ENCODE measurements at regions of chr4 and their contacts with region 1.

Region 1: GRCh38 chr4:126627255-126627654 is 1005.5 kb upstream of the INTU start:
- DNase-seq: peak; percentile 38
- ATAC-seq: peak; percentile 82
- H3K4me3 ChIP-seq: no peak overlapping the region
- H3K27ac ChIP-seq: no peak overlapping the region
- H3K4me1 ChIP-seq: peaks cover 3% of the 10 kb centered on the region; the same call in 1 of the 2 replicates
- H3K27me3 ChIP-seq: no peaks in the 10 kb centered on the region
- CTCF ChIP-seq: peak; percentile 69
- POLR2A ChIP-seq: no peak
- RAD21 ChIP-seq: peak; percentile 70

Region 2: DNA sequence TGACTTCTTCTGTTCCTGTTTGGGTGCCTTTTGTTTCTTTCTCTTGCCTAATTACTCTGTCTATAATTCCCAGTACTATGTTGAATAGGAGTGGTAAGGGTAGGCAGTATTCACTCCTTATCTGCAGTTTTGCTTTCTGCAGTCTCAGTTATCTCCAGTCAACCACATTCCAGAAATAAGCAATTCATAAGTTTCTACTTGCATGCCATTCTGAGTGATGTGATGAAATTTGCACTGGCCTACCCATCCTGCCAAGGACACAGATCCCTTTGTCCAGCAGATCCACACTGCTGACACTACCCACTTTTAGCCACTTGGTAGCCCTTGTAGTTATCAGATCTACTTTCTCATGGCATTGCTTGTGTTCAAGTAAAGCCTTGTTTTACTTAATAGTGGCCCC is 33.9 kb after region 1 on chr4:
- CTCF ChIA-PET with region 1: no interaction called
- POLR2A ChIA-PET with region 1: no interaction called
- dilution Hi-C with region 1: no loop called
- in situ Hi-C with region 1: no loop called
- intact Hi-C with region 1: no loop called
- DNase-seq: peak; percentile 28
- ATAC-seq: peak; percentile 66; the same call in 1 of the 2 replicates
- H3K4me3 ChIP-seq: no peak overlapping the region
- H3K27ac ChIP-seq: no peak overlapping the region
- H3K4me1 ChIP-seq: no peaks in the 10 kb centered on the region
- H3K27me3 ChIP-seq: no peaks in the 10 kb centered on the region
- CTCF ChIP-seq: no peak
- POLR2A ChIP-seq: no peak
- RAD21 ChIP-seq: no peak

Region 3: GRCh38 chr4:126807132-126807531 is 179.9 kb after region 1 on chr4:
- CTCF ChIA-PET with region 1: no interaction called
- POLR2A ChIA-PET with region 1: no interaction called
- dilution Hi-C with region 1: no loop called
- in situ Hi-C with region 1: no loop called
- intact Hi-C with region 1: loop called (anchors 5 kb)
- DNase-seq: peak; percentile 4
- ATAC-seq: no peak; the same call in 1 of the 2 replicates
- H3K4me3 ChIP-seq: no peak overlapping the region
- H3K27ac ChIP-seq: no peak overlapping the region
- H3K4me1 ChIP-seq: peaks cover 3% of the 10 kb centered on the region; the same call in 1 of the 2 replicates
- H3K27me3 ChIP-seq: no peaks in the 10 kb centered on the region
- CTCF ChIP-seq: no peak
- POLR2A ChIP-seq: no peak
- RAD21 ChIP-seq: no peak

Region 4: GRCh38 chr4:126957556-126957955 is 330.3 kb after region 1 on chr4:
- CTCF ChIA-PET with region 1: no interaction called
- POLR2A ChIA-PET with region 1: no interaction called
- dilution Hi-C with region 1: no loop called
- in situ Hi-C with region 1: loop called (anchors 10 kb)
- intact Hi-C with region 1: loop called (anchors 10 kb)
- DNase-seq: peak; percentile 52
- ATAC-seq: peak; percentile 40; the same call in 1 of the 2 replicates
- H3K4me3 ChIP-seq: no peak overlapping the region
- H3K27ac ChIP-seq: no peak overlapping the region
- H3K4me1 ChIP-seq: peaks cover 3% of the 10 kb centered on the region; the same call in 1 of the 2 replicates
- H3K27me3 ChIP-seq: no peaks in the 10 kb centered on the region
- CTCF ChIP-seq: peak; percentile 48
- POLR2A ChIP-seq: no peak
- RAD21 ChIP-seq: peak; percentile 44; the same call in 1 of the 2 replicates

Region 5: DNA sequence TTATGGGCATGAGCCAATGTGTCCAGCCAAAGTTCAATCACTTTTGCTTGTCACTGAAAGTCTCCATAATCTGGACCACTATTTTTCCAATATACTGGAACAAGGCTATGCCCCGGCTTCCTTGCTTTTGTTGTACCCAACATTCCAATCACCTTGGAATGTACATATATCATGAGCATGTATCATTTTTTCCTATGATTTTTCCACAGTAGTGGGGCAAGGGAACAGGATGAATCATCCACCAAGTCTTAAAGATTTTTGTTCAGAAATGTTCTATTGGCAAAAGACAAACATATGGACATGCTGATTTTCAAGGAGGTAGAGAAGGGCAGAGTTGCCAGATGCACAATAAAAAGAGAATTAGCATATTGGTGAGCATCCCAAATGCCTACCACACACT is 457.4 kb after region 1 on chr4:
- CTCF ChIA-PET with region 1: no interaction called
- POLR2A ChIA-PET with region 1: no interaction called
- dilution Hi-C with region 1: no loop called
- in situ Hi-C with region 1: no loop called
- intact Hi-C with region 1: no loop called
- DNase-seq: peak; percentile 3
- ATAC-seq: no peak
- H3K4me3 ChIP-seq: no peak overlapping the region
- H3K27ac ChIP-seq: no peak overlapping the region
- H3K4me1 ChIP-seq: no peaks in the 10 kb centered on the region
- H3K27me3 ChIP-seq: no peaks in the 10 kb centered on the region
- CTCF ChIP-seq: no peak
- POLR2A ChIP-seq: no peak
- RAD21 ChIP-seq: no peak

Region 6: DNA sequence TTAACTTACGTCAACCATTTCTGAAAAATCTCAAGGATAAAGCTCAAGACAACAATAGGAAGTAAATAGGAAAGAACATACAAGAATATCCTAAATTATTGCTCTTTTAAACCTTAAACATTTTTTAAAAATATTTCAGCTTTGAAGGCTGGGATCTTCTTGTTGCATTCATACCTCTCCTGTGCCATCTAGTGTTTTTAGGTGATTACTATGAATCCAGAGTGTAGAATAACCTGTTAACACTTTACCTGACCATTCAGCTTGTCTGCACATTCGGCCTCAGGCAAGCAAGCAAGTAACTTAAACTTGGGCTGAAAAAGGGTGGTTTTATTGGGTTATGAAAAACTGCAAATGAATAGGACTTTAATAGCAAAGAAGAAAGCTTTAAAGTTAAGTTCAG is 497.7 kb after region 1 on chr4:
- CTCF ChIA-PET with region 1: no interaction called
- POLR2A ChIA-PET with region 1: interaction called, 3 read pairs
- dilution Hi-C with region 1: no loop called
- in situ Hi-C with region 1: no loop called
- intact Hi-C with region 1: loop called (anchors 5 kb)
- DNase-seq: peak; percentile 24
- ATAC-seq: no peak
- H3K4me3 ChIP-seq: no peak overlapping the region
- H3K27ac ChIP-seq: no peak overlapping the region
- H3K4me1 ChIP-seq: peaks cover 4% of the 10 kb centered on the region
- H3K27me3 ChIP-seq: no peaks in the 10 kb centered on the region
- CTCF ChIP-seq: peak; percentile 48
- POLR2A ChIP-seq: no peak
- RAD21 ChIP-seq: peak; percentile 51

Region 7: DNA sequence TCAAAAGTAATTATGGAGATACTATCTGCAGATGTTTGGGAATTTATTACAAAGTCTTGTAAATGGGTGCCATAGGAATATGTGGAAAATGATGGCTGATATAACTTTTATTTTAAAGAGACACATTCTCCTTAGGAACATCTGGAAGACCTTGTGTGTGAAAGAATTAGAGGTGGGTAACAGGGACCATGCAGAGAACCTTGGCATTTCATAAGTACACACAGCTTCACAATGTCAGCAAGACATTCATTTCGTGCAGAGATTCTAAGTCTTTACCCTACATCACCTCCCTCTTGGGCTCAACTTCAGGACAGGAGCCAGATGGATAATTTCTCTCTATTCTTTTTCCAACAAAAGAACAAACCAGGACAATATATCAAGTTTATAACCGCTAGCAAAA is 547.4 kb after region 1 on chr4:
- CTCF ChIA-PET with region 1: no interaction called
- POLR2A ChIA-PET with region 1: no interaction called
- dilution Hi-C with region 1: no loop called
- in situ Hi-C with region 1: no loop called
- intact Hi-C with region 1: loop called (anchors 5 kb)
- DNase-seq: no peak
- ATAC-seq: no peak
- H3K4me3 ChIP-seq: no peak overlapping the region
- H3K27ac ChIP-seq: no peak overlapping the region
- H3K4me1 ChIP-seq: no peaks in the 10 kb centered on the region
- H3K27me3 ChIP-seq: no peaks in the 10 kb centered on the region
- CTCF ChIP-seq: no peak
- POLR2A ChIP-seq: no peak
- RAD21 ChIP-seq: no peak

Measured in IMR-90 (cell line).